Stomach (tissue), 19 donors: ENCODE measurements at regions of chr3 and their contacts with region 1.

Region 1: DNA sequence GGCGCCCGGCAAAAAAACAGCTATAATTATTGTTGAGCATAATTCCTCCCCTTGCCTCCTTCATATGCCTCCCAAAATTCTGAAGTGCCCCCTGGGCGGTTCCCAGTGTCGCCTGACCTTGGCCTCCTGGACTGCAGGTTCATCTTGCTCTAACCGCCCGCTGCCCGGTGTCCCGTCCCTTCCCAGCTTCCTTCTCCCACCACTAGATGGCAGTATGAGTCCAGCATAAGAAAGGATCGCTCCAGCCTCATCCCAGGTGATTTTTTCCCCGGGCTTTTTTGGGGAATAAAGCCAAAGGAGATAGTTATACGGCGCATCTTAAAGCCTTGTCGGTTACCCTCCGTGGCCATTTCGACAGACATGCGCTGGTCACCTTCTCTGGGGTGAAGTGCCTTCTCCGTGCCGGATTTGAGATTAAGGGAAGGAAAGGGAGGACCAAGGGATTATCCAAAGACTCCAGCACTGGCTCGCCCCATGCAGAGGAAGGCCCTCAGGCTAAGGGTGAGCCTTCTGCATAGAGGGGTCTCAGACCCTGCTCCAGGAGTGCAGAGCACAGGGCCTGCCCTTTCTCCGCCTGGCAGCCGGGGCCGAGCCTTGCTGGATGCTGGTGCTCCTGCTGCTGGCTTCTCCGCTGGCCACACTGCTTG is 45.8 kb upstream of the TRA2B start:
- DNase-seq: peak; percentile 79 to 88
- H3K4me3 ChIP-seq: no peak overlapping the region
- H3K27ac ChIP-seq: no peak overlapping the region
- H3K4me1 ChIP-seq: peaks cover 5 to 9% (median 7%) of the 10 kb centered on the region in 4 donors
- H3K27me3 ChIP-seq: peaks cover 0 to 11% (median 0%) of the 10 kb centered on the region in 3 donors
- CTCF ChIP-seq: peak in 5 of 7 experiments; percentile 81 to 95 (median 87)
- EP300 ChIP-seq: no peak
- POLR2A ChIP-seq: no peak

Region 2: DNA sequence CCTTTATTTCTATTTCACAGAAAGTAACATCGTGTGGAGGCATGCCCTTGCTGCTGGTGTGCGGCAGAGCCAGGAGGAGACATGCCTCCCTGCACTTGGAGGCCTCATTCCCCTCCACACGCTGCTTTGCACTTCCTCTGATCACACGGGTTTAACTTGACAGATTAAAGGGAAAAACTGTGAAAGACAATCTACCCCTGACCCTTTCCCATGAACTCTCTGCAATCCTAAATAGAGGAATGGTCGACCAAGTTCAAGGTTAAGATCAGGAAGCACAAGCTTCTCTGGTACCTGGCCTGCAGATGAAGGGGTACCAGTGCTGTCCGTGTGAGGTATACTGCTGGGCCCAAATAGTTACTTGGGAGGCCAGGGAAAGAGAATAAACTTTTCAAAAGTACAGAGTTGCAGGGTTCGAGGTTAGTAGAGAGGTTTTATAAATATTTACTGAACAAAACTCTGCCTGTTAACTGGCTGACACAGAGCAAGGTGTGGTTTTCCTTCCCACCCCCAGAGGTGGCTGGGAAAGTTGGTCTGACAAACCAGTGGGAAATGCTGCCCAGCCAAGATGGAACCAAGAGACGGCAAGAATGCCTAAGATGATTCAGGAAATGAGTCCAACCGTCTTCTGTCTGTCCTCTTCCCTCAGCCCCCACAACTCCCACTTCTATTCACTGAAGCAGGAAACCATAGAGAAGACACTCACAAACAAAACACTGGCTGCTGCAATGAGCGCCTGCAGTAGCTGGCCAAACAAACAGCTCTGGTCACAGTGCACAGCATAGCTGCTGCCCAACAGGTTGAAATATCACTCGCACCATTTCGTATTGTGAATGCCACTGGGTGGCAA is 238.4 kb before region 1 on chr3:
- intact Hi-C with region 1: no loop called
- DNase-seq: peak in 1 of 2 donors; percentile 69
- H3K4me3 ChIP-seq: no peak overlapping the region
- H3K27ac ChIP-seq: peak overlapping the region in 3 of 5 donors; percentile 9 to 28 (median 13)
- H3K4me1 ChIP-seq: peaks cover 6 to 16% (median 9%) of the 10 kb centered on the region in 4 donors
- H3K27me3 ChIP-seq: no peaks in the 10 kb centered on the region
- CTCF ChIP-seq: no peak
- EP300 ChIP-seq: no peak
- POLR2A ChIP-seq: no peak

Region 3: DNA sequence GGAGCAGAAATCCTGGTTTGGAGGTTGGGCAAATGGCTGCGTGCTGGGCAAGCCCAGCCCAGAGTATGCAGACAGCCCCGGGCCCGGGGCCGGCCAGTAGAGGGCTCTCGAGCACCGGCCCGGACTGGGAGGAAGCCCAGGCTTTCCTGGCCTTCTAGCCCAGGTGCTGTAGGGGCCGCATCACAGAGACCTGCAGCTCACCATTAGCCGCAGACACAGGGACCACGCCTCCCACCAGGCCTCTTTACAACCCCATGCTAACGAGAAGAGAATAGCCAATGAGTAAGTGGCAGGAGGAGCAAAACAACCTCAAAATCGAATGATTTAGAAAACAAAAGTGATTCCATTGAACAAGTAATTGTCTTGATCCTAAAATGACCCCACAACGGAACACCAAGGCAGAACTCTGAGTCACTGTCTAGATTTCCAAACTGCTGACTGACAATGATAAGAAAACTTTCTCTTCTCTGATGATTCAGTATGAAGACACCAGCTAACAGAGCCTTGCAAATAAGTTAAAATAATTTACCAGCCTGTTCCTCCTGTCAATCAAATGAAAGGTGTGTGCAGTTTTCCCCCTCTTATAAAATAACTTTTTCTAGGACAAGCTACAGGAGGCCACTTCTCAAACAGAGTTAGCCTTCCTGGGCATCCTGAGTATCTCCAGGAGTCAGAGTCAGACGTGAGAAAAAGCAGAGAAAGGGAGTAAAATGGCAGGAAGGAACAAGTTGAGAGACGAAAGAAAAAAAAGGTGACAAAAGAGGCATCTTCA is 276.2 kb after region 1 on chr3:
- intact Hi-C with region 1: loop called (anchors 5 kb)
- DNase-seq: peak; percentile 82 to 88
- H3K4me3 ChIP-seq: no peak overlapping the region
- H3K27ac ChIP-seq: no peak overlapping the region
- H3K4me1 ChIP-seq: peaks cover 0 to 17% (median 11%) of the 10 kb centered on the region in 4 donors
- H3K27me3 ChIP-seq: no peaks in the 10 kb centered on the region
- CTCF ChIP-seq: peak in 5 of 7 experiments; percentile 60 to 85 (median 74)
- EP300 ChIP-seq: no peak
- POLR2A ChIP-seq: no peak

Region 4: DNA sequence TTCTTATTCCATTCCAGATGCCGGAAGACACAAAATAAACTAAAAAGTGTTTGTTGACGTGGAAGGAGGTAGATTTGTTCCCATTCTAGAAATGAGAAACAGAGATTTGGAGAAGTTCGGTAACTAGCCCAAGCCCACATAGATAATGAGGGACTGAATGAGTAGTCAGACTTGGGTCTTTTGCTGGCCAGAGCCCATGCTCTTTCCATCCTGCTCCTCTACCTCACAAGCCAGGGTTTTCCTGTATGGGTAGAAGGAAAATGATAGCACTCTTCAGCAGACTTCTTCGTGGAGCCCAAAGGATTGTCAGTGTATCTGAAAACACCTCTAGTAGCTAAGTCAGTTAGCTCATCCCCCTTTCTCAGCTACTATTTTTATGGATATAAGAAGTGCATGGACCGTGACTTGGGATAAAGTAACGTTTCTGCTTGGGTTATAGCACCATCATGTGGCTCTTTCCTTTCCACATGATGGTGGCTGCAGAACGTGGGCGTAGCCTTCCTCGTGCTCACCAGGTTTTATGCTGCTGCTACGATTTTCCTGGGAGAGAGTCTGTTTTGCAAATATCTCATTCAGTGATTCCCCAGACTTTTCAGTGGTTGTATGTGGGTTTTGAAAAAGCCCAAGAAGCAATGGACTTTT is 293.8 kb after region 1 on chr3:
- intact Hi-C with region 1: loop called (anchors 2 kb)
- DNase-seq: peak in 1 of 2 donors; percentile 78
- H3K4me3 ChIP-seq: no peak overlapping the region
- H3K27ac ChIP-seq: no peak overlapping the region
- H3K4me1 ChIP-seq: peaks cover 0 to 12% (median 5%) of the 10 kb centered on the region in 4 donors
- H3K27me3 ChIP-seq: no peaks in the 10 kb centered on the region
- CTCF ChIP-seq: peak in 5 of 7 experiments; percentile 17 to 56 (median 22)
- EP300 ChIP-seq: no peak
- POLR2A ChIP-seq: no peak

Region 5: DNA sequence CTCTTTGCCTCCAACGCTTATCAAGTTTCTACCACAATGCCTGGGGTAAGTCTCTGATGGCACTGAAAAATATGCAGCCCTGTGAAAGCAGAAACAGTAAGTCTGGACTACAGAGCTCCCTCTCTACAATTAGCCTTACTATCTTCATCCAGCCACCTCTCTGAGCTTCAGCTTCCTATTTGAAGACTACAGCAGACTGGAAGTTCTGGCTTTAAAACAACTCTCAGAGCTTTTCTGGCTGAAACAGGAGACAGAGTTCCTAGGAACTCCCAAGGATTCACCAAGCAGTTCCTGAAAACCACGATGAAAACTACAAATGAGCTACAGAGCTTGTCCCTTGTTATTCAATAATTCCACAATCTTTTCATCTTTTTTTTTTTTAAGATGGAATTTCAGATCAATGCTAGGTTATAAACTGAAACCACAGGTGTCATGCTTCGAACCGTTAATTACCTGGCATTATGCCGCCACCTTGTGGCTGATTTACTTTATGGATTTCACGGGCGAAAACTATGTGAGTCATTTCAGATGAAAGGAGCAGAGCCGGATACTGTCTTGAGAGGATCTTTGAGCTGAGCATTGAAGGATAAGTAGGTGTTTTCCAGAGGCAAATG is 556.7 kb after region 1 on chr3:
- intact Hi-C with region 1: loop called (anchors 5 kb)
- DNase-seq: peak; percentile 84 to 90
- H3K4me3 ChIP-seq: peak overlapping the region in 1 of 4 donors; percentile 17
- H3K27ac ChIP-seq: peak overlapping the region in 1 of 5 donors; percentile 28
- H3K4me1 ChIP-seq: peaks cover 0 to 10% (median 4%) of the 10 kb centered on the region in 4 donors
- H3K27me3 ChIP-seq: no peaks in the 10 kb centered on the region
- CTCF ChIP-seq: peak in 5 of 7 experiments; percentile 17 to 83 (median 75)
- EP300 ChIP-seq: no peak
- POLR2A ChIP-seq: no peak

Region 6: GRCh38 chr3:187015903-187016638 is 1032.5 kb after region 1 on chr3:
- intact Hi-C with region 1: no loop called
- DNase-seq: no peak
- H3K4me3 ChIP-seq: no peak overlapping the region
- H3K27ac ChIP-seq: no peak overlapping the region
- H3K4me1 ChIP-seq: peaks cover 4 to 52% (median 9%) of the 10 kb centered on the region in 4 donors
- H3K27me3 ChIP-seq: no peaks in the 10 kb centered on the region
- CTCF ChIP-seq: no peak
- EP300 ChIP-seq: no peak
- POLR2A ChIP-seq: no peak